ENCODE measurements at regions of chr3 and their contacts with region 1.

Region 1: GRCh38 chr3:197736491-197737318 is at the start of gene RUBCN:
- DNase-seq: peak; percentile 93
- H3K4me3 Mint-ChIP-seq: peak within 1 kb of the TSS; percentile 93
- H3K27ac Mint-ChIP-seq: peak within 1 kb of the TSS; percentile 91
- H3K4me1 Mint-ChIP-seq: peaks cover 25% of the 10 kb centered on the region
- H3K27me3 Mint-ChIP-seq: no peaks in the 10 kb centered on the region
- total RNA-seq, gene RUBCN: 41.7 and 43.6 TPM in 2 replicates

Region 2: DNA sequence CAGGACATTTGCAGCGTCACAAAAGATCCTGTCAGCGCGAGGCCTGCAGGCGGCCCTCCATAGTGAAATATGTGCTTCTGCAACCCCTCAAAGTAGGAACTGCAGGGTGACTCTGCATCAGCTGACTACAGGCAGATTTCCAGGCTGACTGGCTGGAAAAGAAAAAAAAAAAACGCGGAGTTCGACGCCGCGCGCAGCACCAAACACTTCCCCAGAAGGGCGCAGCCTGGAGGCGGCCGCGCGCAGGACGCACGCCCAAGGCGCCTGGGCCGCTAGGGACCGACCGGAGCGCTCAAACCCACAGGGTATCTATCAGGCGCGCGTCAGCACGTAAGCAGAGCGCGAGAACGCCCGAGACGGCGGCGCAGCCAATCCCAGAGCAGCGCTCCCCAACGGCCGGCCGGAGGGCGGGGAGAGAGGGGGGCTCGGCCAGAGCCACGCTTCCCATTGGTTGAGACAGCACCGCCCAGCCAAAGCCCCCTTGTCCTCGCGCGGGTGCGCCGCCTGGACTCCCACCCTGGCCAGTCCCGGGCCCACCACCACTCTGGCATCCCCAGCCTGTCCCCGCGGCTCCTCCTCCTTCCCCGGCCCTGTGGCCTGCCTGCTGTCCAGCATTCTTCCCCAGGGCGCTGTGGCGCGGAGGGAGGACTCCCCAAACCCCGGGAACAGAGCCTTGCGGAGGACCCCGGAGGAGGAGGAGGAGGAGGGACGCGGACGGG is 182.0 kb before region 1 on chr3:
- intact Hi-C with region 1: loop called (anchors 10 kb)
- DNase-seq: peak; percentile 93
- H3K4me3 Mint-ChIP-seq: peak overlapping the region; percentile 92
- H3K27ac Mint-ChIP-seq: peak overlapping the region; percentile 96
- H3K4me1 Mint-ChIP-seq: peaks cover 32% of the 10 kb centered on the region
- H3K27me3 Mint-ChIP-seq: peaks cover 13% of the 10 kb centered on the region

Region 3: DNA sequence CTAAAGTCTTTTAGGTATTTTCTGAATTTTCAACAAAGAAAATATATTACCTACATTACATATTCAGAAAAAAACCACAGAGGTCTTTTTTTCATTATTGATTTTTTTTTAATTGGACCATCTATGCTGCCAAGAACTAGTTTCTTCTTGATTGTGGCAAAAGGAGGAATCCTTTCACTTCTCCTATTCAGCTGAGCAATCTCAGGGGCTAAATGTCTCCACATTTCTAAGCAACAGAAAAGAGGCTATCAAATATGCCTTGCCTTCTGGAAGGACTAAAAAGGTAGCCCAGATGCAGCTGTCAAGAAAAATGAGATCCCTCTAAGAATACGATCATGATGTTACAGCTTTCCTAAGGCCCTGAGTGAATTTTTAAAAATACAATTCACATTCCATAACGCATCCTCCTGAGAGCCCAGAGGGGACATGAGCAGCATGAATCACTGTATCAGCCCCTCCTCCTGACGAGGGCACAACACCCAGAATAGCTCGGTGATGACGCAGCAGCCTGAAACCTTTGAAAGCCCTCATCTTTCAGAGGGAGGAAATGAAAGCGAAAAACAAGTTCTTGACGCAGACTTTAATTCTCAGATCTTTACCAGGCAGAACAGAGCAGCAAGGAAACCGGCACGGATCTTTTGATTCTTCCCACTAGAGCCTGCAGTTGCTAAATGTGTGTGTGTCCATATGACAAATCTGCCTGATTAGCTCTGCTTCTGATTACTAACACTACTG is 24.6 kb before region 1 on chr3:
- intact Hi-C with region 1: loop called (anchors 1 kb)
- DNase-seq: peak; percentile 80
- H3K4me3 Mint-ChIP-seq: peak overlapping the region; percentile 75
- H3K27ac Mint-ChIP-seq: peak overlapping the region; percentile 92
- H3K4me1 Mint-ChIP-seq: peaks cover 33% of the 10 kb centered on the region
- H3K27me3 Mint-ChIP-seq: no peaks in the 10 kb centered on the region

Region 4: GRCh38 chr3:197820550-197821335 is 84.0 kb after region 1 on chr3:
- intact Hi-C with region 1: no loop called
- DNase-seq: no peak
- H3K4me3 Mint-ChIP-seq: no peak overlapping the region
- H3K27ac Mint-ChIP-seq: no peak overlapping the region
- H3K4me1 Mint-ChIP-seq: no peaks in the 10 kb centered on the region
- H3K27me3 Mint-ChIP-seq: no peaks in the 10 kb centered on the region

Region 5: DNA sequence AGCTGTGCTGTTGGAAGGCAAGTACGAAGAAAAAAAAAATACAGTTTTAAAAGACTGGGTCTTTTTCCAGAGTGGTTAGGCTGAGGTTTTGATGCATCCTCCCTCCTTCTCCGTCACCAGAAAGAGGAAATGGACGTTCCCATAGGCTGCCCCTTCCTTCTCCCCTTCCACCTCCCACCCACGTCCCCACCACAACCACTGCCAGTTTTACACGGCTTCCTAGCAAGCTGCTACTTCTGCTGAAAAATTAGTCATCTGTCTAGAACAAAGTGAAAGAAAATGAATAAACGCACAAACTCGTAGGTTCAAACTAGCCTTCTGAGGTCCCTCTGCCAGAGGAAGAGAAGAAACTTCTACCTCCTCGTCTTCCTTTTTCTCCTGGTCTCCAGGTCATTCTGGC is 141.7 kb after region 1 on chr3:
- intact Hi-C with region 1: loop called (anchors 2 kb)
- DNase-seq: peak; percentile 34
- H3K4me3 Mint-ChIP-seq: no peak overlapping the region
- H3K27ac Mint-ChIP-seq: peak overlapping the region; percentile 92
- H3K4me1 Mint-ChIP-seq: peaks cover 29% of the 10 kb centered on the region
- H3K27me3 Mint-ChIP-seq: no peaks in the 10 kb centered on the region

Measured in activated T-helper 2 cell treated with anti-CD3 and anti-CD28 coated beads, Interferon-gamma antibody, Interleukin-2, Interleukin-4, amounts not matched to agents 10 μg/mL and 5 μg/mL and 100 μg/mL, durations not matched to agents 14 hours and 24 hours and 36 hours (primary cell).